ENCODE measurements at regions of chr1 and their contacts with region 1.

Region 1: GRCh38 chr1:67332653-67333529 is 25.2 kb downstream of the IL12RB2 start:
- DNase-seq: peak in 12 of 35 experiments; percentile 13 to 74 (median 24)
- ATAC-seq: peak; percentile 42 to 82 (median 64)
- H3K4me3 ChIP-seq: no peak overlapping the region
- H3K4me3 Mint-ChIP-seq: no peak overlapping the region
- H3K27ac ChIP-seq: peak overlapping the region; percentile 65
- H3K27ac Mint-ChIP-seq: peak overlapping the region; percentile 20 to 64
- H3K4me1 ChIP-seq: peaks cover 23 to 24% of the 10 kb centered on the region in 2 experiments
- H3K4me1 Mint-ChIP-seq: peaks cover 38 to 51% (median 44%) of the 10 kb centered on the region in 3 donors
- H3K27me3 ChIP-seq: no peaks in the 10 kb centered on the region
- H3K27me3 Mint-ChIP-seq: no peaks in the 10 kb centered on the region

Region 2: GRCh38 chr1:67162957-67163356 is 169.9 kb before region 1 on chr1:
- CTCF ChIA-PET with region 1: interaction called in 1 of 2 experiments, 11 read pairs
- POLR2A ChIA-PET with region 1: no interaction called
- DNase-seq: peak in 1 of 35 experiments; percentile 17
- ATAC-seq: peak; percentile 18 to 59 (median 36)
- H3K4me3 ChIP-seq: no peak overlapping the region
- H3K4me3 Mint-ChIP-seq: no peak overlapping the region
- H3K27ac ChIP-seq: no peak overlapping the region
- H3K27ac Mint-ChIP-seq: no peak overlapping the region
- H3K4me1 ChIP-seq: no peaks in the 10 kb centered on the region
- H3K4me1 Mint-ChIP-seq: peaks cover 12 to 31% (median 24%) of the 10 kb centered on the region in 3 donors
- H3K27me3 ChIP-seq: peaks cover 0 to 3% of the 10 kb centered on the region in 2 experiments
- H3K27me3 Mint-ChIP-seq: peaks cover 4 to 14% of the 10 kb centered on the region in 2 donors

Region 3: DNA sequence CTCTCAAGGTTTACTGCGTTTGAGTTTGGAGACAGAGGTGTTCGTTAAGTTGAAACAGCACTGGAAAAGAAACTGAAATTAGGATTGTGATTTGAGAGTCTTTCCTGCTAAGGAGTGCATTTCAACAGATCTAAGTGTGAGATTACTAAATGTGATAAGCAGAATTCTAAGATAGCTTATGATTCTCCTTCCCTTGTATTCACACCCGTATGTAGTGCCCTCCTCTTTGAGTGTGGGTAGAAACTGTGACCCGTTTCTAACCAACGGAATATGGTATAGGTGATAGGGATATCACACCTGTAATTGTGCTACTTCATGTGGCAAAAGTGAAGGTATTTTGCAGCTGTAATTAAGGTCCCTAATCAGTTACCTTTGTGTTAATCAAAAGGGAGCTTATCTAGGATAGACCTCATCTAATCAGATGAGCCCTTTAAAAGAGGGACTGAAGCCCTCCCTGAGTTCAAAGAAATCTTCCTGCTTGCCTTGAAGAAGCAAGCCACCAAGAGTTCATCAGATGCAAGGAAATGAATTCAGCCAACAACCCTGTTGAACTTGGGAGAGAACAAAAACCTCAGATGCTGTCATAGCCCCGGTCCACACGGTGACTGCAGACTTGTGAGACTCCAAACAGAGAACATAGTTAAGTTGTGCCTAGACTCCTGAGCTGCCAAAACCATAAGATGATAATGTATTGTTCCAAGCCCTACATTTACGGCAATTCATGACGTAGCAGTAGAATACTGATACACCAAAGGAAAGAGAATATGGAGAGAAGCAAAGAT is 37.9 kb before region 1 on chr1:
- CTCF ChIA-PET with region 1: interaction called in 1 of 2 experiments, 4 read pairs
- POLR2A ChIA-PET with region 1: interaction called in 1 of 2 experiments, 10 read pairs
- DNase-seq: peak in 2 of 35 experiments; percentile 5 to 8
- ATAC-seq: peak in 1 of 4 experiments; percentile 44
- H3K4me3 ChIP-seq: no peak overlapping the region
- H3K4me3 Mint-ChIP-seq: no peak overlapping the region
- H3K27ac ChIP-seq: no peak overlapping the region
- H3K27ac Mint-ChIP-seq: no peak overlapping the region
- H3K4me1 ChIP-seq: no peaks in the 10 kb centered on the region
- H3K4me1 Mint-ChIP-seq: peaks cover 0 to 8% (median 0%) of the 10 kb centered on the region in 3 donors
- H3K27me3 ChIP-seq: no peaks in the 10 kb centered on the region
- H3K27me3 Mint-ChIP-seq: peaks cover 4 to 7% of the 10 kb centered on the region in 2 donors

Region 4: GRCh38 chr1:67376381-67376780 is 43.5 kb after region 1 on chr1:
- CTCF ChIA-PET with region 1: no interaction called
- POLR2A ChIA-PET with region 1: no interaction called
- DNase-seq: no peak
- ATAC-seq: no peak
- H3K4me3 ChIP-seq: no peak overlapping the region
- H3K4me3 Mint-ChIP-seq: no peak overlapping the region
- H3K27ac ChIP-seq: no peak overlapping the region
- H3K27ac Mint-ChIP-seq: no peak overlapping the region
- H3K4me1 ChIP-seq: no peaks in the 10 kb centered on the region
- H3K4me1 Mint-ChIP-seq: no peaks in the 10 kb centered on the region
- H3K27me3 ChIP-seq: no peaks in the 10 kb centered on the region
- H3K27me3 Mint-ChIP-seq: no peaks in the 10 kb centered on the region

Region 5: DNA sequence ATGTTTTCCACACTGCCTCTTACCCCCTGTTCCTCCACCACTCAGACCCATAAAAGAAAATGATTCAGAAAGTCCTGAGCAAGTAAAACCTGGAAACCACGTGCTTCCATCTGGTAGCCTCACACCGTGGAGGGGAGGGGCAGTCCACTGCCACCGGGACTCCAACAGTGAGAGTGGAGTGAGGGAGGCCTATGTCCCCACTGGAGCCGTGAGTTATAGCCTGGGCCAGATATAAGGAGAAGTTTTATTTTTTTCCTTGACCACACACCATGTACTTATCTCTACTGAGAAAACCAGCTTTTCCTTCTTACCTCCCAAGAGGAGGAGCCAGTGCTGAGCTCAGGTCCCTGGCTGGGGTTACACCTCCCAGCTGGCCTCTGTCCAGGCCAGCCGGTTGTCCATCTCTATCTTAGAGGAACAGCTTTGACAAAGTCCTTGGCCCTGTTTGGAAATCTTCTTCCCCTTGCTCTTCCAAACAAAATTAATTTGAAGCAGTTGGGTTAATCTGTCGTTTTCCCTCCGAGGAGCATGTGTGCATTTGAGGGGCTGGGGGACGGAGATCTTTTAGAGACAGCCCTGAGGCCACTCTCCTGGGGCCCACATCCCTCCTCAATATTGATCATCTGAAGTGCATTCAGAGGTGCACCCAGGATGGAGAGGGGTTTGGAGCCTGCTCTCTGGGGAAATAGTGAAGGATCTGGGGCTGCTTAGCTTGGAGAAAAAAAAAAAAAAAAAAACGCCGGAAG is 146.4 kb after region 1 on chr1:
- CTCF ChIA-PET with region 1: no interaction called
- POLR2A ChIA-PET with region 1: no interaction called
- DNase-seq: no peak
- ATAC-seq: no peak
- H3K4me3 ChIP-seq: no peak overlapping the region
- H3K4me3 Mint-ChIP-seq: no peak overlapping the region
- H3K27ac ChIP-seq: no peak overlapping the region
- H3K27ac Mint-ChIP-seq: no peak overlapping the region
- H3K4me1 ChIP-seq: no peaks in the 10 kb centered on the region
- H3K4me1 Mint-ChIP-seq: no peaks in the 10 kb centered on the region
- H3K27me3 ChIP-seq: peaks cover 0 to 4% of the 10 kb centered on the region in 2 experiments
- H3K27me3 Mint-ChIP-seq: peaks cover 0 to 2% of the 10 kb centered on the region in 2 donors

Measured in T-cell (primary cell).